ENCODE measurements at regions of chr17 and their contacts with region 1.

Region 1: GRCh38 chr17:50865984-50866774 is at the start of gene TOB1:
- DNase-seq: peak; percentile 99
- ATAC-seq: peak; percentile 79 to 87 (median 81)
- H3K4me3 ChIP-seq: peak within 1 kb of the TSS; percentile 90
- H3K27ac ChIP-seq: peak within 1 kb of the TSS; percentile 100
- H3K4me1 ChIP-seq: peaks cover 23% of the 10 kb centered on the region
- H3K27me3 ChIP-seq: no peaks in the 10 kb centered on the region
- CTCF ChIP-seq: no peak
- total RNA-seq, gene TOB1: 74.9 to 155 (median 102) TPM

Region 2: GRCh38 chr17:50707289-50708049 is 158.7 kb before region 1 on chr17 and contains the start of gene ANKRD40:
- intact Hi-C with region 1: no loop called
- DNase-seq: peak; percentile 89 to 94
- ATAC-seq: peak; percentile 87 to 91 (median 88)
- H3K4me3 ChIP-seq: peak within 1 kb of the TSS; percentile 86
- H3K27ac ChIP-seq: peak within 1 kb of the TSS; percentile 94
- H3K4me1 ChIP-seq: peaks cover 51% of the 10 kb centered on the region
- H3K27me3 ChIP-seq: no peaks in the 10 kb centered on the region
- CTCF ChIP-seq: no peak
- total RNA-seq, gene ANKRD40: 91.8 to 132 (median 112) TPM

Region 3: GRCh38 chr17:50904521-50905459 is 38.6 kb after region 1 on chr17:
- intact Hi-C with region 1: loop called (anchors 5 kb)
- DNase-seq: peak; percentile 41 to 68
- ATAC-seq: peak; percentile 50 to 72 (median 64)
- H3K4me3 ChIP-seq: peak overlapping the region; percentile 41
- H3K27ac ChIP-seq: peak overlapping the region; percentile 94
- H3K4me1 ChIP-seq: peaks cover 34% of the 10 kb centered on the region
- H3K27me3 ChIP-seq: no peaks in the 10 kb centered on the region
- CTCF ChIP-seq: no peak

Region 4: GRCh38 chr17:50931144-50931908 is 65.1 kb after region 1 on chr17:
- intact Hi-C with region 1: loop called (anchors 1 to 2 kb)
- DNase-seq: peak; percentile 88 to 94
- ATAC-seq: peak; percentile 82 to 85 (median 83)
- H3K4me3 ChIP-seq: peak overlapping the region; percentile 64
- H3K27ac ChIP-seq: peak overlapping the region; percentile 99
- H3K4me1 ChIP-seq: peaks cover 48% of the 10 kb centered on the region
- H3K27me3 ChIP-seq: no peaks in the 10 kb centered on the region
- CTCF ChIP-seq: no peak

Region 5: GRCh38 chr17:50949989-50950881 is 84.1 kb after region 1 on chr17:
- intact Hi-C with region 1: loop called in 1 of 2 experiments (anchors 1 kb)
- DNase-seq: peak; percentile 86 to 93
- ATAC-seq: peak; percentile 63 to 78 (median 73)
- H3K4me3 ChIP-seq: peak overlapping the region; percentile 48
- H3K27ac ChIP-seq: peak overlapping the region; percentile 98
- H3K4me1 ChIP-seq: peaks cover 90% of the 10 kb centered on the region
- H3K27me3 ChIP-seq: no peaks in the 10 kb centered on the region
- CTCF ChIP-seq: peak; percentile 78

Region 6: DNA sequence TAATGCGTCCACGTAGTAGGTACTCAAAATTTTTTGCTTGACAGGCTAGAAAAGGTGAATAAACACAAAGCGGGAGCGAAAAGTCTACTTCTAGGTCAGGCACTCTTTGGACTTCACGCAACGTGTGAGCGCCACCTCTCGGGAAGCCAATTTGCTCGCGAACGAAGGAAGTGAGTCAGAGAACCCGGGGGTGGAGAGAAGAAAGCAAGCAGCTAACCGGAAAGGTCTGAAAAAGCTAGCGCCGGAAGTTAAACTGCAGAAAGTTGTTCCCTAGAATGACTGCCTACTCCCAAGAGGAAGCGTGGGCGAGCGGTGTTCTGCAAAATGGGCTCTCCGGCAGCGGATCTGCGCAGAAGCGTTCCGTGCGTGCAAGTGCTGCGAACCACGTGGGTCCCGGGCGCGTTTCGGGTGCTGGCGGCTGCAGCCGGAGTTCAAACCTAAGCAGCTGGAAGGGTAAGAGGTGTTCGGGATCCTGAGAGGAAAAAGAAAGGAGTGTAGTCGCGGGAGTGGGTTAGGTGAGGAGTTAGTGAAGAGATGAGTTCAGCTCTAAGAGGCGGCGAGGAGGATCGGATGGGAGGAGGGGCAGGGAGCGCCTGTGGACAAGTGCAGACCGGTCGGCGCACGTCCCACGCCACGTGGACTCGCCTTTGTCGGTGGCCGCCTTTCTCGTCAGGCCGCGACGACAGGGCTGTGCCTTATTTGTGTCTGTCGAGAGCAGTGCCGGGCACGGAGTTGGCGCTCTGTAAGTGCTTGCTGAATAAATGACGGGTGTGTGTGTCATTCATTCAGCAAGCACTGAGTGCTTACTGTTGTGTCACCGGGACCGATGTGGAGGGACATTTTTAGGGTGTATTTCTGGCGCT is 287.3 kb after region 1 on chr17 and contains the start of gene NME1:
- intact Hi-C with region 1: loop called in 1 of 2 experiments (anchors 10 kb)
- DNase-seq: peak; percentile 92 to 97
- ATAC-seq: peak; percentile 93 to 95 (median 94)
- H3K4me3 ChIP-seq: peak within 1 kb of the TSS; percentile 88
- H3K27ac ChIP-seq: peak within 1 kb of the TSS; percentile 83
- H3K4me1 ChIP-seq: peaks cover 5% of the 10 kb centered on the region
- H3K27me3 ChIP-seq: no peaks in the 10 kb centered on the region
- CTCF ChIP-seq: peak; percentile 76
- total RNA-seq, gene NME1: 29.3 to 75.0 (median 50.9) TPM

Measured in psoas muscle (tissue), 8 donors.